ENCODE measurements at regions of chr9 and their contacts with region 1.

Region 1: GRCh38 chr9:72022841-72023240 is 37.6 kb downstream of the C9orf57 start:
- DNase-seq: peak; percentile 43 to 75 (median 50)
- H3K4me3 ChIP-seq: no peak overlapping the region
- H3K4me3 Mint-ChIP-seq: no peak overlapping the region
- H3K27ac ChIP-seq: no peak overlapping the region
- H3K27ac Mint-ChIP-seq: no peak overlapping the region
- H3K4me1 ChIP-seq: peaks cover 0 to 2% of the 10 kb centered on the region in 2 donors
- H3K4me1 Mint-ChIP-seq: peaks cover 9% of the 10 kb centered on the region
- H3K27me3 ChIP-seq: no peaks in the 10 kb centered on the region
- H3K27me3 Mint-ChIP-seq: peaks cover 0 to 5% (median 2%) of the 10 kb centered on the region in 3 donors
- CTCF ChIP-seq: no peak

Region 2: GRCh38 chr9:71295928-71296327 is 726.9 kb before region 1 on chr9:
- intact Hi-C with region 1: no loop called
- DNase-seq: no peak
- H3K4me3 ChIP-seq: no peak overlapping the region
- H3K4me3 Mint-ChIP-seq: no peak overlapping the region
- H3K27ac ChIP-seq: no peak overlapping the region
- H3K27ac Mint-ChIP-seq: no peak overlapping the region
- H3K4me1 ChIP-seq: no peaks in the 10 kb centered on the region
- H3K4me1 Mint-ChIP-seq: no peaks in the 10 kb centered on the region
- H3K27me3 ChIP-seq: no peaks in the 10 kb centered on the region
- H3K27me3 Mint-ChIP-seq: peaks cover 0 to 3% (median 0%) of the 10 kb centered on the region in 3 donors
- CTCF ChIP-seq: no peak

Region 3: GRCh38 chr9:71806901-71807307 is 215.9 kb before region 1 on chr9:
- intact Hi-C with region 1: loop called in 1 of 2 experiments (anchors 5 kb)
- DNase-seq: peak; percentile 34 to 59 (median 47)
- H3K4me3 ChIP-seq: no peak overlapping the region
- H3K4me3 Mint-ChIP-seq: no peak overlapping the region
- H3K27ac ChIP-seq: no peak overlapping the region
- H3K27ac Mint-ChIP-seq: no peak overlapping the region
- H3K4me1 ChIP-seq: no peaks in the 10 kb centered on the region
- H3K4me1 Mint-ChIP-seq: no peaks in the 10 kb centered on the region
- H3K27me3 ChIP-seq: no peaks in the 10 kb centered on the region
- H3K27me3 Mint-ChIP-seq: peaks cover 2 to 4% (median 2%) of the 10 kb centered on the region in 3 donors
- CTCF ChIP-seq: peak; percentile 92

Region 4: GRCh38 chr9:71822456-71822855 is 200.4 kb before region 1 on chr9:
- intact Hi-C with region 1: loop called in 1 of 2 experiments (anchors 5 kb)
- DNase-seq: no peak
- H3K4me3 ChIP-seq: no peak overlapping the region
- H3K4me3 Mint-ChIP-seq: no peak overlapping the region
- H3K27ac ChIP-seq: no peak overlapping the region
- H3K27ac Mint-ChIP-seq: no peak overlapping the region
- H3K4me1 ChIP-seq: peaks cover 0 to 4% of the 10 kb centered on the region in 2 donors
- H3K4me1 Mint-ChIP-seq: peaks cover 5% of the 10 kb centered on the region
- H3K27me3 ChIP-seq: no peaks in the 10 kb centered on the region
- H3K27me3 Mint-ChIP-seq: peaks cover 0 to 2% (median 1%) of the 10 kb centered on the region in 3 donors
- CTCF ChIP-seq: no peak

Region 5: DNA sequence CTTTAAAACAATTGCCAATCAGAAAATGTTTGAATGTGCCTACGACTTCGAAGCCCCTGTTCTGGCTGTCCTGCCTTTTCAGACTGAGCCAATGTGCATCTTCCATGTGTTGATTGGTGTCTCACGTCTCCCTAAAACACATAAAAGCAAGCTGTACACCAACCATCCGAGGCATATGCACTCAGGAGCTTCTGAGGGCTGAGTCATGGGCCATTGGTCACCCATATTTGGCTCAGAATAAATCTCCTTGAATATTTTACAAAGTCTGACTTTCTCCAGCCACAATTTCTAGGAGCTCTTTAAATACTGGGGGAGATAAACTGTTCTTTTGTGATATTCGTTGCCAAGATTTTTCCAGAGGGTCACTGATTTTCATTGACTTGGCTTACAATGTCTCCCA is 16.3 kb before region 1 on chr9:
- intact Hi-C with region 1: no loop called
- DNase-seq: no peak
- H3K4me3 ChIP-seq: no peak overlapping the region
- H3K4me3 Mint-ChIP-seq: no peak overlapping the region
- H3K27ac ChIP-seq: no peak overlapping the region
- H3K27ac Mint-ChIP-seq: no peak overlapping the region
- H3K4me1 ChIP-seq: no peaks in the 10 kb centered on the region
- H3K4me1 Mint-ChIP-seq: no peaks in the 10 kb centered on the region
- H3K27me3 ChIP-seq: no peaks in the 10 kb centered on the region
- H3K27me3 Mint-ChIP-seq: peaks cover 0 to 3% (median 0%) of the 10 kb centered on the region in 3 donors
- CTCF ChIP-seq: no peak

Region 6: GRCh38 chr9:72065076-72065475 is 42.2 kb after region 1 on chr9:
- intact Hi-C with region 1: no loop called
- DNase-seq: no peak
- H3K4me3 ChIP-seq: no peak overlapping the region
- H3K4me3 Mint-ChIP-seq: no peak overlapping the region
- H3K27ac ChIP-seq: no peak overlapping the region
- H3K27ac Mint-ChIP-seq: no peak overlapping the region
- H3K4me1 ChIP-seq: no peaks in the 10 kb centered on the region
- H3K4me1 Mint-ChIP-seq: no peaks in the 10 kb centered on the region
- H3K27me3 ChIP-seq: no peaks in the 10 kb centered on the region
- H3K27me3 Mint-ChIP-seq: peaks cover 0 to 5% (median 4%) of the 10 kb centered on the region in 3 donors
- CTCF ChIP-seq: no peak